CD8-positive, alpha-beta T cell (primary cell): ENCODE measurements at regions of chr1 and their contacts with region 1.

Region 1: GRCh38 chr1:187185396-187185795 is 356.6 kb downstream of the PLA2G4A start:
- DNase-seq: no peak
- ATAC-seq: no peak
- H3K4me3 ChIP-seq: no peak overlapping the region
- H3K4me3 Mint-ChIP-seq: no peak overlapping the region
- H3K27ac ChIP-seq: no peak overlapping the region
- H3K27ac Mint-ChIP-seq: no peak overlapping the region
- H3K4me1 ChIP-seq: no peaks in the 10 kb centered on the region
- H3K4me1 Mint-ChIP-seq: no peaks in the 10 kb centered on the region
- H3K27me3 ChIP-seq: no peaks in the 10 kb centered on the region
- H3K27me3 Mint-ChIP-seq: no peaks in the 10 kb centered on the region
- CTCF ChIP-seq: no peak

Region 2: DNA sequence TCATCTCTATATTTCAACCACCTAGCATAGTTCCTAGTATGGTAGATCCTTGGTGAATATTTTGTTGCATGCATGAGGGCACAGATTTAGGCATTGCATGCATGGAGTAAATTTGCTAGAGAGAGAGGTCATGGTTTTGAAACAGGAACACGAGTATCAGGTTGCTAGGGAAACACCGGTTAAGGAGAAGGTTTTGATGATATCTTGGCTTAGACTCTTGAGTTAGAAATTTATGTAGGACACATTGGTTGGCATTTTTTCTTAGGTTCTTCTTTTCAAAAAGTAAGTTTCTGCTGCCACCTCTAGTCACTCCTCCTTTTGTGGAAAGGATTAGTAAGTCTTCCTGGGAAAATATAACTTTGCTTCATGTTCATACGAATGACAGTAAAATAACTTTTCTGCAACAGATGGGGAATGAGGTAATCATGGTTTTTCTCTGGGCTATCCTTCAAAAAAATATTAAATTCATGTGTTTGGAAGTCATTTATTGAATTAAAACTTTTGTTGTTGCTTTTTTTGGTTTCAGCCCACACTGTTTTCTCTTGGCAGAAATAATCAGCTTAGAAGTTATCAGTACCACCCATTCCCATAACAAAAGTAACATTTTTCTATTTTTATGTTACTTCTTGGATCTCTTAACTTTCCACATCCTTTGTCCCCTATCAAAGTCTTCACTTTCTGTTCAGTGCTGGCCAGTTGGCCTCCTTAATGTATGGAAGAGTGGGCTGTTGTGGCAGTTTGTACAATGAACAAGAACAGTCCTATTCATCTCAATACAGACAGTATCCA is 259.3 kb before region 1 on chr1:
- CTCF ChIA-PET with region 1: no interaction called
- POLR2A ChIA-PET with region 1: no interaction called
- intact Hi-C with region 1: no loop called
- DNase-seq: no peak
- ATAC-seq: no peak
- H3K4me3 ChIP-seq: no peak overlapping the region
- H3K4me3 Mint-ChIP-seq: no peak overlapping the region
- H3K27ac ChIP-seq: no peak overlapping the region
- H3K27ac Mint-ChIP-seq: no peak overlapping the region
- H3K4me1 ChIP-seq: no peaks in the 10 kb centered on the region
- H3K4me1 Mint-ChIP-seq: no peaks in the 10 kb centered on the region
- H3K27me3 ChIP-seq: no peaks in the 10 kb centered on the region
- H3K27me3 Mint-ChIP-seq: no peaks in the 10 kb centered on the region
- CTCF ChIP-seq: no peak

Region 3: GRCh38 chr1:187168297-187168696 is 17.1 kb before region 1 on chr1:
- CTCF ChIA-PET with region 1: no interaction called
- POLR2A ChIA-PET with region 1: no interaction called
- intact Hi-C with region 1: loop called in 1 of 2 experiments (anchors 1 kb)
- DNase-seq: no peak
- ATAC-seq: no peak
- H3K4me3 ChIP-seq: no peak overlapping the region
- H3K4me3 Mint-ChIP-seq: no peak overlapping the region
- H3K27ac ChIP-seq: no peak overlapping the region
- H3K27ac Mint-ChIP-seq: no peak overlapping the region
- H3K4me1 ChIP-seq: no peaks in the 10 kb centered on the region
- H3K4me1 Mint-ChIP-seq: no peaks in the 10 kb centered on the region
- H3K27me3 ChIP-seq: no peaks in the 10 kb centered on the region
- H3K27me3 Mint-ChIP-seq: no peaks in the 10 kb centered on the region
- CTCF ChIP-seq: no peak